ENCODE measurements at regions of chr13 and their contacts with region 1.

Region 1: DNA sequence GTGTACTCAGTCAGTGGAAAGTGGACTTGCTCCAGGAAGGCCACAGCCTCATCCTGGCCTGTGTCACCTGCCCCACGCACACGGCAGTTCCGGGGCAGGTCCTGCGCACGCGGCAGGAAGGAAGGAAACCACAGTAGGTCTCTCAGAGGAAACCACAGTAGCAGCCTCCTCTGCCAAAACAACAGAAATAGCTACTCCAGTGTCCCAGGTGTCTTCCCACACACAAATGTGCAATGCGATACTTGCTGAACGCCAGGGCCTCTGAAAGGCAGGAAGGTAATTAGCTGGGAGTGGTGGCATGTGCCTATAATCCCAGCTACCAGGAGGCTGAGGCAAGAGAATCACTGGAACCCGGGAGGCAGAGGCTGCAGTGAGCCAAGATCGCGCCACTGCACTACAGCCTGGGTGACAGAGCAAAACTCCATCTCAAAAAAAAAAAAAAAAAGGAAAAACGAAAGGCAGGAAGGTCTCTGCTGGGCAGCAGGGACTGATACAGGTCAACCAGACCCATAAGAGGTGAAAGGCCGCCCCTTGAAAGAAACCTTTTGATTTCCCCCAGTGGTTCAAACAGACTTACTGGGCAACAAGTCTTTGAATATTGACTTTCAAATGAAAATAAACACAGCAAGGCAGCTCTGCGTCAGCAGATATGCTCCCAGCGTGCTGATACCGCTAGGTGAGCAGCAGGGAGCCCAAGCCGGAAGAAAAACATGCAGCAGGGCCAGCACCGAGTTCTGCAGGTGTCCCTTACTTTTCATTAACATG is 49.5 kb downstream of the CRYL1 start:
- DNase-seq: peak; percentile 45 to 97 (median 77)
- ATAC-seq: peak; percentile 94 to 98 (median 96)
- H3K4me3 ChIP-seq: peak overlapping the region; percentile 48 to 55
- H3K4me3 Mint-ChIP-seq: peak overlapping the region; percentile 78 to 82 (median 79)
- H3K27ac ChIP-seq: peak overlapping the region; percentile 83
- H3K27ac Mint-ChIP-seq: peak overlapping the region; percentile 88 to 89
- H3K4me1 ChIP-seq: peaks cover 23 to 36% of the 10 kb centered on the region in 2 experiments
- H3K4me1 Mint-ChIP-seq: peaks cover 48 to 68% (median 49%) of the 10 kb centered on the region in 3 donors
- H3K27me3 ChIP-seq: peaks cover 0 to 4% of the 10 kb centered on the region in 2 experiments
- H3K27me3 Mint-ChIP-seq: no peaks in the 10 kb centered on the region

Region 2: GRCh38 chr13:19984430-19985218 is 491.5 kb before region 1 on chr13:
- CTCF ChIA-PET with region 1: no interaction called
- POLR2A ChIA-PET with region 1: interaction called in 1 of 2 experiments, 15 read pairs
- DNase-seq: peak in 2 of 35 experiments; percentile 5 to 54
- ATAC-seq: peak; percentile 37 to 70 (median 39)
- H3K4me3 ChIP-seq: no peak overlapping the region
- H3K4me3 Mint-ChIP-seq: no peak overlapping the region
- H3K27ac ChIP-seq: no peak overlapping the region
- H3K27ac Mint-ChIP-seq: peak overlapping the region in 1 of 2 donors; percentile 23
- H3K4me1 ChIP-seq: peaks cover 0 to 6% of the 10 kb centered on the region in 2 experiments
- H3K4me1 Mint-ChIP-seq: peaks cover 44 to 62% (median 58%) of the 10 kb centered on the region in 3 donors
- H3K27me3 ChIP-seq: no peaks in the 10 kb centered on the region
- H3K27me3 Mint-ChIP-seq: no peaks in the 10 kb centered on the region

Region 3: GRCh38 chr13:20301403-20302071 is 174.6 kb before region 1 on chr13:
- CTCF ChIA-PET with region 1: no interaction called
- POLR2A ChIA-PET with region 1: no interaction called
- DNase-seq: no peak
- ATAC-seq: no peak
- H3K4me3 ChIP-seq: peak overlapping the region in 1 of 2 donors; percentile 25
- H3K4me3 Mint-ChIP-seq: peak overlapping the region in 1 of 3 donors; percentile 57
- H3K27ac ChIP-seq: no peak overlapping the region
- H3K27ac Mint-ChIP-seq: no peak overlapping the region
- H3K4me1 ChIP-seq: peaks cover 0 to 9% of the 10 kb centered on the region in 2 experiments
- H3K4me1 Mint-ChIP-seq: peaks cover 0 to 5% (median 2%) of the 10 kb centered on the region in 3 donors
- H3K27me3 ChIP-seq: peaks cover 7 to 30% of the 10 kb centered on the region in 2 experiments
- H3K27me3 Mint-ChIP-seq: peaks cover 19 to 49% of the 10 kb centered on the region in 2 donors

Region 4: DNA sequence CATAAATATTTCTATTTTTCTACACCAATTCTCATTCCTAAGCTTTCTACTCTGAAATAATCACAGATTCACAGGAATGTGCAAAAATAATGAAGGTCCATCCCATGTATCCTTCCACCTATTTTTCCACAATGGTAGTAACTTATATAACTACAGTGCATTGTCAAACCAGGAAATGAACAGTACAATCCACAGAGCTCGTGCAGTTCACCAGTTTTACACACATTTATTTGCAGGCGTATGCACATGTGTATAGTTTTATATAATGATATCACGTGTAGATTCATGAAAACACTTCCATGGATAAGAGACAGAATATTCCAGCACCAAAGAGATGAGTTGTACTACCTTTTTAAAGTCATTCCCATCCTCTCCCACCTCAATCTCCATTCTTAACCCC is 284.8 kb after region 1 on chr13:
- CTCF ChIA-PET with region 1: no interaction called
- POLR2A ChIA-PET with region 1: no interaction called
- DNase-seq: no peak
- ATAC-seq: no peak
- H3K4me3 ChIP-seq: no peak overlapping the region
- H3K4me3 Mint-ChIP-seq: no peak overlapping the region
- H3K27ac ChIP-seq: no peak overlapping the region
- H3K27ac Mint-ChIP-seq: no peak overlapping the region
- H3K4me1 ChIP-seq: no peaks in the 10 kb centered on the region
- H3K4me1 Mint-ChIP-seq: peaks cover 0 to 6% (median 0%) of the 10 kb centered on the region in 3 donors
- H3K27me3 ChIP-seq: no peaks in the 10 kb centered on the region
- H3K27me3 Mint-ChIP-seq: no peaks in the 10 kb centered on the region

Region 5: GRCh38 chr13:20860844-20861243 is 384.7 kb after region 1 on chr13:
- CTCF ChIA-PET with region 1: no interaction called
- POLR2A ChIA-PET with region 1: interaction called in 1 of 2 experiments, 18 read pairs
- DNase-seq: no peak
- ATAC-seq: no peak
- H3K4me3 ChIP-seq: no peak overlapping the region
- H3K4me3 Mint-ChIP-seq: no peak overlapping the region
- H3K27ac ChIP-seq: no peak overlapping the region
- H3K27ac Mint-ChIP-seq: no peak overlapping the region
- H3K4me1 ChIP-seq: no peaks in the 10 kb centered on the region
- H3K4me1 Mint-ChIP-seq: peaks cover 6 to 9% (median 8%) of the 10 kb centered on the region in 3 donors
- H3K27me3 ChIP-seq: no peaks in the 10 kb centered on the region
- H3K27me3 Mint-ChIP-seq: no peaks in the 10 kb centered on the region

Measured in T-cell (primary cell).